Panc1 (cell line): ENCODE measurements at regions of chr7 and their contacts with region 1.

Region 1: DNA sequence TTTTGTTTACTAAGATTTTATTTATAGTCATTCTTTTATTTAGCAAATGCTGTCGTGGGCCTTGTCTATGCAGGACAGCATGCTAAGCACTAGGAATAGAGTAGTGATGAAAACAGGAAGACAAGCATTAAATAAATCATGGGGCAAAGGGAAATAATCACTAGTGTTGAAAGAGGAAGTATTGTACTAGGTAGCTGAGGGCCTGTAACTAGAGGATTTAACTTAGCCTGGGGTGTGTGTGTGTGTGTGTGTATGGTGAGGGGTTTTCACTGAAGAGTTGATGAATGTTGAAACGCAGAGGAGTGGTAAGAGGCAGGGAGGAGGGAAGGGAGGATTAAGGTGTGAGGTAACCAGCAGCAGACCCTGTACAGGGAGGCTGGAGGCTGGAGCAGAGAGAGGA is 446.4 kb downstream of the SDK1 start:
- DNase-seq: no peak
- ATAC-seq: no peak
- H3K4me3 ChIP-seq: no peak overlapping the region
- H3K27ac ChIP-seq: no peak overlapping the region
- H3K4me1 ChIP-seq: no peaks in the 10 kb centered on the region
- H3K27me3 ChIP-seq: no peaks in the 10 kb centered on the region
- CTCF ChIP-seq: no peak

Region 2: DNA sequence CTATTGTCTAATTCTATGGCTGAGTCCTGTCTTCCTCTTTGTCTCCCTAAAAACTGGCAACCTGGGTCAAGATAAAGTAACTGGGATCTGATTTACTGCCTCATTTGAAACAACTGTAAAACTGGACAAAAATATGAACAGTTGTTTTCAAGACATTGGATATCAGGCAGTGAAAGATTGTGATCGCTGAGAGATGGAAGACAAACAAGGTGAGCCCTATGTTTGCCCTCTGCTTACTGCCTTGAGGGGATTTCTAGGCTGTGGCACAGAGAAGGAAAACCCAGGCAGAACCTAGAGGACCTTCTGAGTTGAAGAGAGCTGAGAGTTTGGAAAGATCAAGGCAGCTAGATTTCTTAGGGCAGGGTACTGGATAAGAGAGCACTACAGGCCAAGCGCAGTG is 118.8 kb before region 1 on chr7:
- CTCF ChIA-PET with region 1: no interaction called
- POLR2A ChIA-PET with region 1: interaction called, 15 read pairs
- in situ Hi-C with region 1: no loop called
- intact Hi-C with region 1: no loop called
- DNase-seq: no peak
- ATAC-seq: no peak
- H3K4me3 ChIP-seq: no peak overlapping the region
- H3K27ac ChIP-seq: no peak overlapping the region; the same call in 1 of the 2 replicates
- H3K4me1 ChIP-seq: no peaks in the 10 kb centered on the region
- H3K27me3 ChIP-seq: no peaks in the 10 kb centered on the region
- CTCF ChIP-seq: no peak

Region 3: GRCh38 chr7:3892157-3892556 is 144.7 kb after region 1 on chr7:
- CTCF ChIA-PET with region 1: no interaction called
- POLR2A ChIA-PET with region 1: no interaction called
- in situ Hi-C with region 1: no loop called
- intact Hi-C with region 1: no loop called
- DNase-seq: no peak
- ATAC-seq: no peak
- H3K4me3 ChIP-seq: no peak overlapping the region
- H3K27ac ChIP-seq: no peak overlapping the region
- H3K4me1 ChIP-seq: peaks cover 3% of the 10 kb centered on the region; the same call in 1 of the 2 replicates
- H3K27me3 ChIP-seq: no peaks in the 10 kb centered on the region
- CTCF ChIP-seq: no peak